Heart right ventricle (tissue), 16 donors: ENCODE measurements at regions of chr21 and their contacts with region 1.

Region 1: GRCh38 chr21:30733026-30733425 is 14.0 kb downstream of the KRTAP21-2 start:
- DNase-seq: no peak
- ATAC-seq: no peak
- H3K4me3 ChIP-seq: no peak overlapping the region
- H3K27ac ChIP-seq: no peak overlapping the region
- H3K4me1 ChIP-seq: no peaks in the 10 kb centered on the region
- H3K27me3 ChIP-seq: peaks cover 0 to 4% (median 0%) of the 10 kb centered on the region in 7 donors
- CTCF ChIP-seq: peak in 5 of 9 donors; percentile 16 to 45 (median 44)

Region 2: DNA sequence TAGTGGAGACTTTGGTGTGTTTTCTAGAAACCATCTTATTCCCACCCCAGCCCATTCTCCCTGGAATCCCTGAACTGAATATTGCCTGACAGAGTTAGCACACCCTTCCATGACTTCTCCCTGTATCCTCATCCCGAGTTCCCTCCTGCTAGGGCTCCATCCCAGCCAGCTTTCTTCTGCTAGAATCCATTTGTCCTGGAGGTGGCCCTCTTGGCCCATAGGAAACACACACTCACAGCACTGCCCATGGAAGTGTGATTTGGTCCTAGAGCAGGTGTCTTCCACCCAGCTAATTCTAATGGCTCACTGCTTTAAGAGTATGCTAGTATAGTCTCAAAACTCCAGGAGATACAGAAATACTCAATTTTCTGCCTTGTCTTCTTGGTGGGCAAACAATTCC is 288.8 kb before region 1 on chr21:
- intact Hi-C with region 1: loop called in 6 of 10 experiments (anchors 2 to 10 kb)
- DNase-seq: peak in 1 of 2 donors; percentile 4
- ATAC-seq: peak in 6 of 8 donors; percentile 25 to 79 (median 60)
- H3K4me3 ChIP-seq: no peak overlapping the region
- H3K27ac ChIP-seq: no peak overlapping the region
- H3K4me1 ChIP-seq: no peaks in the 10 kb centered on the region
- H3K27me3 ChIP-seq: no peaks in the 10 kb centered on the region
- CTCF ChIP-seq: peak in 7 of 9 donors; percentile 13 to 55 (median 52)

Region 3: DNA sequence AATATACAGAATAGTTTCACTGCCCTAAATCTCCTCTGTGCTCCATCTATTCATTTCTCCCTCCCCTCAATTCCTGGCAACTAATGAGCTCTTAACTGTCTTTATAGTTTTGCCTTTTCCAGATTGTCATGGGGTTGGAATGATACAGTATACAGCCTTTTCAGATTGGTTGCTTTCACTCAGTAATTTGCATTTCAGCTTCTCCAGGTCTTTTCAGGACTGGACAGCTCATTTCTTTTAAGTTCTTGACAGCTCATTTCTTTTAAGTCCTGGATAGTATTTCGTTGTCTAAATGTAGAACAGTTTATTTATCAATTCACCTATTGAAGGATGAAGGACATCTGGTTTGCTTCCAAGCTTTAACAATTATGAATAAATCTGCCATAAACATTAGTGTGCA is 37.1 kb before region 1 on chr21:
- intact Hi-C with region 1: no loop called
- DNase-seq: no peak
- ATAC-seq: no peak
- H3K4me3 ChIP-seq: no peak overlapping the region
- H3K27ac ChIP-seq: no peak overlapping the region
- H3K4me1 ChIP-seq: no peaks in the 10 kb centered on the region
- H3K27me3 ChIP-seq: no peaks in the 10 kb centered on the region
- CTCF ChIP-seq: no peak

Region 4: GRCh38 chr21:30831194-30831765 is 98.3 kb after region 1 on chr21:
- intact Hi-C with region 1: no loop called
- DNase-seq: no peak
- ATAC-seq: no peak
- H3K4me3 ChIP-seq: no peak overlapping the region
- H3K27ac ChIP-seq: no peak overlapping the region
- H3K4me1 ChIP-seq: no peaks in the 10 kb centered on the region
- H3K27me3 ChIP-seq: peaks cover 0 to 4% (median 0%) of the 10 kb centered on the region in 7 donors
- CTCF ChIP-seq: peak; percentile 27 to 56 (median 52)